ENCODE measurements at regions of chr9 and their contacts with region 1.

Region 1: DNA sequence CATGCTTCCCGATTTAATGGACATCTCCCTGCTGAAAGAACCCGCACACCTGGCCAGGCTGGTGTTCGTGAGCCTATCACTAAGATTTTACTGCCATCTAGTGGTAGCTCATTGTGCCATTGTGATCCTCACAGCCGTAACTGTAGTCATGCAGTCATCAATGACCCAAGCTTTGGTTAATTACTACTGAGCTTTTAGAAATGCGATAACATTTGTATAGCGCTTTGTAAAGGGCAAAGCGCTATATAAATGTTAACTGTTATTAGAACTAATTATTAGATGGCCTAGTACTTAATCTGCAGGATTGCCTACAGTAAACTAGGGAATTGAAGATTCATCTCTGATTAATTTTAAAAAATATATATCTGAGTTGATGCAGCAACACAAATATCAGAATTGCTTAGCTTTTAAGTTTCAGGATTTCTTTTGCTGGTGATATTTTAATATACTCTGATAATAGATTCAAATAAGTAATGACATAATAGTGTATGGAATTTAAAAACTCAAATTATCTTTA is 90.2 kb downstream of the HACD4 start:
- DNase-seq: peak; percentile 82

Region 2: DNA sequence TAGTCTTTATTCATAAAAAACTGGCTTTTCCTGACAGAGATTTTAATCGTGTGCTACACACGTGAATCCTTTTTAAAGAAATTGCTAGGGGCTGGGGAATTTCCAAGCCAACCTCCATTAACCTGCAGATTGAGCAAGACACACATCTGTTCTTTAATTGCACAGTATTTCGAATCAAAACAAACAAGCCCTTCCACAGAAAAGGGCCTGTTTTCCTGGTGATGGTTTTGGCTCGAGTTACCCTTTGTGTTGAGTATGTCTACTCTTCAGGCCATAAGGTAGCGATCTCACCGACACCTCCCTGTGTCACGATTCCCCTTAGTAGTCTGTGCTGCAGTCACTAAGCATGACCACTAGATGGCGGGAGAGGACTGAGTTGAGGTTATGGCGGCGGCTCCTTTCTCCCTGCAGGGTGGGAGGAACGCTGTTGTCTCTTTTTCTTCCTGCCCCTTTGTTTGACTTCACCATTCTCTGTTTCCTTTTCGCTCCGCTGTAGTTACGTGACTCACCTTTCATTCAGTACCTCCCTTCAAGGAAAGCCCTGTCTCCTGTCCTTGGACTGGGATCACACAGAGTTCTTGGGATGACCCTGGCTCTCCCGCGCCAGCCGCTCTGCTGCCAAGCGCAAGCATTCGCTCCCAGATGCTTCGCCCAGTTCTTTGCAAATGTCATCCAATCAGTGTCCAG is 1015.3 kb before region 1 on chr9:
- in situ Hi-C with region 1: loop called (anchors 25 kb)
- DNase-seq: peak; percentile 80

Region 3: DNA sequence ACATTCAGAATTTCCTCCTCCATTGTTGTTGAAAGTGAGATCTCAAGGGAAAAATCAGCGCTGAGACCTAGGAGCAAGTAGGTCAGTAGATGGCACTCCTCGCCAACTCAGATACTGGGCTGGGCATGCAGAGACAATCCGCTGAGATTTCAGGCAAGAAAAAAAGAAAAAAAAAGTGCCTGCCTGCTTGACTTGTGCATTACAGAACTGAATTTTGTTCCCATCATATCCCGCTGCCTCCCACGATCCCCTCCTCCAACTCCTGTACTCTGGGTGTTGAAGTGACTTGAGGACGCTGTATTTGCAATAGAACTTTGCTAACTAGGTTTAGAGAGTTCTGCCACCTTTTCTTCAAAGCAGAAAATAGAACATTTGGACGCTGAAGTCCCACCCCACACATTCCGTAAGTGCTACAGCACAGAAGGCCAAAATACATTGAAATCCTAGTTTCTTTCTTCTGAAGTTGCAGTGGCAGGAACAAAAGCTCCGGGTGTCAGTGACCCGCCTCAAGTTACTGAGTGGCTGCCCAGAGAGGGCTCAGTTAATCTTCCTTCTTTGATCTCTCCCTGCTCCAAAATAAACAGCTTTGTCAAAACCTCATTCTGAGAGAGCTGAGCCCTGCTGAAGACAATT is 584.7 kb before region 1 on chr9:
- in situ Hi-C with region 1: loop called (anchors 25 kb)
- DNase-seq: peak; percentile 76

Region 4: DNA sequence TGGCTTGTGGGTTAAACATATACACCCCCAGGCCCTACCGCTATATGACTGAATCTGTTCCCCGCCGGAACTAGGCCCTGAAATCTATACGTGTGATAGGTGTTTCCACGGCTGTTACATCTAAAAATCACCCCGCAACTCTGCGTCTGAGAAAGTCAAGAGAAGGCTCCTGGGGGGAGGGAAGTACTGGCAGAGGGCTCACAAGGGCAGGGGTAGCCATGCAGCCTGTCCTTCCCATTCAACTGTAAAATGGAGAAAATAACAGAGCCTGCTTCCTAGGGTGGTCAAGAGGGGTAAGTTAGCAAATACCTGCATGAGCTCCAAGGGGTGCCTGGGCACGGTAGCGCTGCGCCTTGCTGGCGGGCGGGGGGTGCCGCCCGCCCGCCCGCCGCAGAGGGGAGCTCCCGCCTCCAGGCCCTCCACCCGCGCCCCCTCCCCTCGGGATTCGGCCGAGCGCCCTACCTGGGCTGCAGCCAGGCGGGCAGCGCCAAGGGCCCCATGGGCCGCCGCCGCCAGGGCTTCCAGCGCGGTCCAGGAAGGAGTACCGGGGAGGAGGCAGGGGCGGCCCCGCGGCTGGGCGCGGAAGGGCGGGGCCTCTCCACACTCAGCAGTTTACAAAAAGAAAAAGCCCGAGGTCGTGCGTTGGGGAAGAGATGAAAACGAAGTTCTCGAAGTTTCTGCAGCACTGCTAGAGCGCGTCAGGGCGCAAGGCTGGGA is 90.0 kb after region 1 on chr9 and contains the start of gene HACD4:
- in situ Hi-C with region 1: loop called (anchors 25 kb)
- DNase-seq: peak; percentile 82